Caco-2 (cell line): ENCODE measurements at regions of chr22 and their contacts with region 1.

Region 1: DNA sequence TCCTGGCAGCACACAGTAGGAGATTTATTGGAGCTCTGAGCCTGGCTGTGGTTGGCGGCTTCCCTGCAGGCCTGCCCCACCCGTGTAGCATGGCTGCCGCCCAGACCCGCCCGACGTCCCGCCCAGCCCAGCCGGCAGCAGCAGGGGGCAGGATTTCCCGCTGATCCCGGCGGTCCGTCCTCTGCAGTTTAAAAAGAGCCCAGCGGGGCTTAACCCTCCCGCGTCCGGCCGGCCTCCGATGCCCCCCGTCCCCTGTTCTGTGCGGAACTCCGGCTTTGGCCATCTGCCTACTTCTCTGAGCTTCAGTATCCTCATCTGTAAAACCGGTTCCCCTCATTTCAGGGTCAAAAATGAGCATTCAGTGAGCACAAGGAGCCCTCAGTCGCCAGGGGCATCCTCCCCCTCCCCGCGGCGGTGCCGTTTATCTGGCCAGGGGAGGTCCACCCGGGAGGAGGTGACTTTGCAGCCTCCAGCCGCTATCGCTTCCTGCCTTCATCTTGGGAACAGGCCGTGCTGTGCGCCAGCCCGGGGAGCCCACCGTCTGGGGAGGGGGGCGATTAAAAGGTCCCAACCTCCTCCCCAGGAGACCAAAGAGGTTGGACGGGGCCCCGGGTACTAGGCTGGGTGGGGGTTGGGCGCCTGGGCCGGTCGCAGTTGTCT is at the start of gene GAS2L1:
- DNase-seq: peak; percentile 86 to 92
- H3K4me3 ChIP-seq: peak within 1 kb of the TSS; percentile 82
- H3K4me3 Mint-ChIP-seq: peak within 1 kb of the TSS; percentile 90
- H3K27ac Mint-ChIP-seq: peak within 1 kb of the TSS; percentile 79
- H3K4me1 ChIP-seq: peaks cover 22% of the 10 kb centered on the region
- H3K4me1 Mint-ChIP-seq: no peaks in the 10 kb centered on the region
- H3K27me3 ChIP-seq: no peaks in the 10 kb centered on the region
- H3K27me3 Mint-ChIP-seq: no peaks in the 10 kb centered on the region
- CTCF ChIP-seq: peak; percentile 73 to 78
- total RNA-seq, gene GAS2L1: 20.4 and 21.1 TPM in 2 replicates

Region 2: GRCh38 chr22:29320546-29320945 is 14.2 kb after region 1 on chr22:
- CTCF ChIA-PET with region 1: interaction called, 17 read pairs
- POLR2A ChIA-PET with region 1: interaction called, 3 read pairs
- intact Hi-C with region 1: no loop called
- DNase-seq: peak in 1 of 2 experiments; percentile 31
- H3K4me3 ChIP-seq: no peak overlapping the region
- H3K4me3 Mint-ChIP-seq: no peak overlapping the region
- H3K27ac Mint-ChIP-seq: no peak overlapping the region
- H3K4me1 ChIP-seq: no peaks in the 10 kb centered on the region
- H3K4me1 Mint-ChIP-seq: no peaks in the 10 kb centered on the region
- H3K27me3 ChIP-seq: no peaks in the 10 kb centered on the region; the same call in 1 of the 2 replicates
- H3K27me3 Mint-ChIP-seq: peaks cover 3% of the 10 kb centered on the region
- CTCF ChIP-seq: peak in 1 of 2 experiments; percentile 55

Region 3: DNA sequence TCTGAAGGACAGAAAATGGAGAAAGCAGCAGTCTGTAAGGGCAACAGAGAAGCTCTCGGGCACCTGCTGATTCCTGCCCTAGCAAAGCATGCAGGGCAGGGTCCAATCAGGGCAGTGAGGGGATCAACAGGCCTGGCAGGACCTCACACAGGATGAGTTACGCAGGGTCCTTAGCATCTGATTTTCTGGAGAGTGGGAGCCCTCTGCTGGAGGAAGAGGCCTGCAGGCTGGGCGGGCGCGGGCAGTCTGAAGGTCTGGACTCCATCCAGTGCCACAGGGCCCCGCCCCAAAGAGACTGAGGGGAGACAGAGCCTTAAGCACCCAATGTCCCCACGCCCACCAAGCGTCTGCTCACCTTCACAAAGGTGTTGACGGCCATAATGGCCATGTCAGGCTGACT is 53.2 kb after region 1 on chr22:
- CTCF ChIA-PET with region 1: interaction called, 4 read pairs
- POLR2A ChIA-PET with region 1: interaction called, 4 read pairs
- intact Hi-C with region 1: loop called (anchors 1 kb)
- DNase-seq: peak; percentile 49 to 59
- H3K4me3 ChIP-seq: no peak overlapping the region
- H3K4me3 Mint-ChIP-seq: no peak overlapping the region
- H3K27ac Mint-ChIP-seq: no peak overlapping the region
- H3K4me1 ChIP-seq: no peaks in the 10 kb centered on the region
- H3K4me1 Mint-ChIP-seq: no peaks in the 10 kb centered on the region
- H3K27me3 ChIP-seq: no peaks in the 10 kb centered on the region
- H3K27me3 Mint-ChIP-seq: no peaks in the 10 kb centered on the region
- CTCF ChIP-seq: peak; percentile 49 to 68

Region 4: GRCh38 chr22:29387921-29388758 is 81.8 kb after region 1 on chr22 and contains the start of gene AP1B1:
- CTCF ChIA-PET with region 1: no interaction called
- POLR2A ChIA-PET with region 1: no interaction called
- intact Hi-C with region 1: no loop called
- DNase-seq: peak; percentile 96 to 97
- H3K4me3 ChIP-seq: peak within 1 kb of the TSS; percentile 73
- H3K4me3 Mint-ChIP-seq: peak within 1 kb of the TSS; percentile 88
- H3K27ac Mint-ChIP-seq: peak within 1 kb of the TSS; percentile 92
- H3K4me1 ChIP-seq: peaks cover 57% of the 10 kb centered on the region
- H3K4me1 Mint-ChIP-seq: peaks cover 21% of the 10 kb centered on the region
- H3K27me3 ChIP-seq: no peaks in the 10 kb centered on the region
- H3K27me3 Mint-ChIP-seq: no peaks in the 10 kb centered on the region
- CTCF ChIP-seq: no peak
- total RNA-seq, gene AP1B1: 101 and 102 TPM in 2 replicates

Region 5: GRCh38 chr22:29524440-29525191 is 218.3 kb after region 1 on chr22:
- CTCF ChIA-PET with region 1: no interaction called
- POLR2A ChIA-PET with region 1: no interaction called
- intact Hi-C with region 1: loop called (anchors 10 kb)
- DNase-seq: peak; percentile 57 to 68
- H3K4me3 ChIP-seq: no peak overlapping the region
- H3K4me3 Mint-ChIP-seq: no peak overlapping the region
- H3K27ac Mint-ChIP-seq: peak overlapping the region; percentile 66
- H3K4me1 ChIP-seq: no peaks in the 10 kb centered on the region; the same call in 1 of the 2 replicates
- H3K4me1 Mint-ChIP-seq: no peaks in the 10 kb centered on the region
- H3K27me3 ChIP-seq: no peaks in the 10 kb centered on the region
- H3K27me3 Mint-ChIP-seq: no peaks in the 10 kb centered on the region
- CTCF ChIP-seq: peak; percentile 62 to 69